CD8-positive, alpha-beta T cell (primary cell): ENCODE measurements at regions of chr17 and their contacts with region 1.

Region 1: DNA sequence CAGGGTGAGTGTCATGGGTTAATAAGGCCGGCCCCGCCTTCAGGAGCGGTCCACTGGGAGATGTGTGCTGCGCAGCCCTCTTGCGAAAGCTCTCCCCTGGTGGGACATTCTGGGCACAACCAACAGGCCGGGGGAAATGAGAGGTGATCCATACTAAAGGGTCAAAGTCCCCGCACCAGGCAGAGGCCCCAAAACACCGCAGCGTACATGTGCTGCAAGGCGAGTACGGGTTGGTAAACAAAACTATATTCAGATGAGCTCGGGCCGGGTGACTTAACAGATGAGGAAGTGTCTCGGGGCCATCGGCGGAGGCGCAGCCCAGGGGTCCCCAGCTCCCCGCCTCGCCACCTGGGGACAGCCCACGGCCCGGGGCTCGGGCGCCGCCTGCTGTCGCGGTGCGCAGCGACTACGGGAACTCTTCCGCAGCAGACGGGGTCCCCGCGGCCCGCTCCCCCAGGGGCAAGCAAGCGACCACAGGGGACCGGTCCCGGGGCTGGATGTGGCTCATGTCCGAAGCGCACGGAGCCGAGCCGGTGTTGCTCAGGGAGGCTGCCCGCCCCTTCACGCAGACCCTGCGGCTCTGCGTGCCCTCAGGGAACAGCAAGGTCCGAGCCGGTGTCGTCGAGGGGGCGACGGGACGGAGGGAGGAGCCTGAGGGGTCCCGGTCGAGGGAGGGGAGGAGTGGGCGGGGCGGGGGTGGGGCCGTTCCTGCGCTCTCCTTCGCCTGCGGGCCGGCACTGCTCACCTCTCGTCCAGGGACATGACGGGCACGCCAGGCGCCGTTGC is at the start of gene RAB37:
- DNase-seq: peak in 8 of 9 experiments; percentile 43 to 81 (median 62)
- ATAC-seq: peak; percentile 30
- H3K4me3 ChIP-seq: peak within 1 kb of the TSS; percentile 65 to 85
- H3K4me3 Mint-ChIP-seq: peak within 1 kb of the TSS; percentile 91
- H3K27ac ChIP-seq: peak within 1 kb of the TSS; percentile 47 to 55
- H3K27ac Mint-ChIP-seq: peak within 1 kb of the TSS; percentile 93
- H3K4me1 ChIP-seq: peaks cover 42% of the 10 kb centered on the region
- H3K4me1 Mint-ChIP-seq: peaks cover 51% of the 10 kb centered on the region
- H3K27me3 ChIP-seq: no peaks in the 10 kb centered on the region
- H3K27me3 Mint-ChIP-seq: no peaks in the 10 kb centered on the region
- CTCF ChIP-seq: peak; percentile 58
- total RNA-seq, gene RAB37: 33.7 to 36.0 TPM

Region 2: DNA sequence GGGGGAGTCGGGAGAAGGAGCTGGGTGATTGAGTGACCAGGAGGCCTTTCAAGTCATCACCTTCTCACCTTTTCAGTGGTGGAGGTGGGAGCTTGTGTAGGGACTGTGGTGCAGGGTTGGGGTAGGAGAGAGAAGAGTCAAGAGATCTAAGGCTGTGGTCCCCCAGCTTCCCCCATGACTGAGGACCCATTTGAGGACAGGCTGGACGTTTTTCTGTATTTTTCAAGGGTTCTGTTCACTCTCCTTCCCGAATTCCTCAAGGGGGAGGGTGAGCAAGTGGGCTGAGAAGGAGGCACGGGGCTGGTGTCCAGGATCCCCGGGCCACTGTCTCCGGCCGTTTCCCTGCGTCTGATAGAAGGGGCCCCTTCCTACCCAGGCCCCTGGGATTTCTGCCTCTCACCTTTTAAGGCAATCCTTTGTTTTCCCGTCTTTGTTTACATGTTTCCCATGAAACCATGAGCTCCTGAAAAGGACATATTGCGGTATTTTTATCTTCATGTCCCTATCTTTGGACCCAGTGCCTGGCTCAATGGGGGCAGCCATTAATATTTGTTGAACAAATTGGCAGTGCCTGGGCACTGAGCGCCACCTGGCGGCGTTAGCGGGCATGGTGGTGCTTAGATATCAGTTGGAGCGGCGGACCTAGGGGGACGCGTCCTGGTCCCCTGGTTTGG is 279.4 kb before region 1 on chr17:
- CTCF ChIA-PET with region 1: no interaction called
- POLR2A ChIA-PET with region 1: no interaction called
- intact Hi-C with region 1: loop called in 1 of 2 experiments (anchors 10 kb)
- DNase-seq: peak; percentile 54 to 83 (median 71)
- ATAC-seq: peak; percentile 62
- H3K4me3 ChIP-seq: no peak overlapping the region
- H3K4me3 Mint-ChIP-seq: no peak overlapping the region
- H3K27ac ChIP-seq: no peak overlapping the region
- H3K27ac Mint-ChIP-seq: no peak overlapping the region
- H3K4me1 ChIP-seq: peaks cover 38% of the 10 kb centered on the region
- H3K4me1 Mint-ChIP-seq: peaks cover 32% of the 10 kb centered on the region
- H3K27me3 ChIP-seq: no peaks in the 10 kb centered on the region
- H3K27me3 Mint-ChIP-seq: peaks cover 3% of the 10 kb centered on the region
- CTCF ChIP-seq: peak; percentile 91

Region 3: DNA sequence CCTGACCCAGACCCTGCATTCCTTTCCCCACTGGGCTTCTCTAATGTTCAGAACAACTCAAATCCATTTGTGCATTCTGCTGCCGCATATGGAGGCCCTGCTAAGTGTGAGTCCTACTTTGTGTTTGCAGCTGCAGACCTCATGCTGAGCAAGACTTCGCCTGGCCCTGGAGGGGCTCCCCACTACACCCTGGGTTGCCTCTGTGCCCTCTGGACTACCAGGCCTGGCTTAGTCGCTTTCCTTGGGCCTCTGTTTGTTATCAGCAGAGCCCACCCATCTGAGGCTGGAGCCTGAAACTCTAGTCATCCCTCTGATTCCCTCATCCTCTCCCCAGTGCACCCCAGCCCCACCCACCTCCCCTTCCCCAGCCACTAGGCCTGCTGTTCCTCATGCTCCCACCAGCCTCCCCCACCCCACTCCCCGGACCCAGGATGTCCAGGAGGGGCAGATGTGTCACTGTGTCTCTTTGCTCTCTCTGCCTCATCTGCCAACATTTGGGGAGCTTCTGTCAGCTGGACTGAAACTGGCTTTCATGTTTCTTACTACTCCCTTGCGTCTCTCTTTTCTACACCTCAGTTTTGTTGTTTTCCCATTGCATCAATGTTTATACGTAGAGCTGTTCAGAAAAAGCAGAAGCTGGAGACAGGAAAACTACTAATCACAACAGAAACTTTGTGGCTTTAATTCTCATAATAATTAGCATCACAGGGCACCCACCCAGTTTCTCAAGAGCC is 95.3 kb before region 1 on chr17:
- CTCF ChIA-PET with region 1: no interaction called
- POLR2A ChIA-PET with region 1: no interaction called
- intact Hi-C with region 1: no loop called
- DNase-seq: peak in 1 of 9 experiments; percentile 16
- ATAC-seq: no peak
- H3K4me3 ChIP-seq: no peak overlapping the region
- H3K4me3 Mint-ChIP-seq: no peak overlapping the region
- H3K27ac ChIP-seq: no peak overlapping the region
- H3K27ac Mint-ChIP-seq: no peak overlapping the region
- H3K4me1 ChIP-seq: peaks cover 10% of the 10 kb centered on the region
- H3K4me1 Mint-ChIP-seq: peaks cover 7% of the 10 kb centered on the region
- H3K27me3 ChIP-seq: peaks cover 2 to 11% of the 10 kb centered on the region in 2 experiments
- H3K27me3 Mint-ChIP-seq: peaks cover 40% of the 10 kb centered on the region
- CTCF ChIP-seq: no peak

Region 4: GRCh38 chr17:74671031-74671771 is 65.5 kb before region 1 on chr17:
- CTCF ChIA-PET with region 1: interaction called, 16 read pairs
- POLR2A ChIA-PET with region 1: interaction called, 3 read pairs
- intact Hi-C with region 1: no loop called
- DNase-seq: peak; percentile 51 to 84 (median 75)
- ATAC-seq: peak; percentile 97
- H3K4me3 ChIP-seq: no peak overlapping the region
- H3K4me3 Mint-ChIP-seq: no peak overlapping the region
- H3K27ac ChIP-seq: no peak overlapping the region
- H3K27ac Mint-ChIP-seq: no peak overlapping the region
- H3K4me1 ChIP-seq: no peaks in the 10 kb centered on the region
- H3K4me1 Mint-ChIP-seq: no peaks in the 10 kb centered on the region
- H3K27me3 ChIP-seq: peaks cover 2 to 15% of the 10 kb centered on the region in 2 experiments
- H3K27me3 Mint-ChIP-seq: peaks cover 51% of the 10 kb centered on the region
- CTCF ChIP-seq: no peak

Region 5: DNA sequence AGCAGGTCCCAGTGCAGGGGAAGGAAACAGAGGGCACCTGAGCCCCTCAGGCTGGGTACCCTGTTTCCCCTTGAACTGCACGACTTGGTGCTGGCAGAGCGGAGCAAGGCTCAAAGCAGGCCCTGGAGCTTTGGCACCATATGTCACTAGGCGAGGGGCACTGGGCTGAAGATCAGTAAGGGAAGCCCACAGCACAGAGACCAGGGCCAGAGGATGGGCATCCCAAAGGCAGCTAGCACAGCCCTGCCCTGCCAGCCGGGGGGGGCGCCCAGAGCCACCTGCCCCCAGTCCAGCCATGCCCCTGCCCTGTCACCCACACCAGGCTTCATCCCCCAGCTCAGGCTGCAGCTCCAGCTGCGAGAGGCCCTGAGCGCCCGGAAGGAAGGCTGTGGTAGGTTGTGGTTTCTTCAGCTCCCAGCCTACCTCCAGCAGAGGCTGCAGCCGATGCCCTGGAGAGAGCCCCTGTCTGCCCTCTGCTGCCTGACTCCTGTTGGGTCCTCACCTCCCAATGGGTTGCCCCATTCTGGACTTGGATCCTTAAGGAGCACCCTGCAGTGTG is 22.6 kb after region 1 on chr17:
- CTCF ChIA-PET with region 1: interaction called, 41 read pairs
- POLR2A ChIA-PET with region 1: interaction called, 67 read pairs
- intact Hi-C with region 1: no loop called
- DNase-seq: peak in 7 of 9 experiments; percentile 47 to 85 (median 71)
- ATAC-seq: peak; percentile 83
- H3K4me3 ChIP-seq: peak overlapping the region; percentile 37 to 41
- H3K4me3 Mint-ChIP-seq: peak overlapping the region; percentile 81
- H3K27ac ChIP-seq: peak overlapping the region; percentile 38 to 62
- H3K27ac Mint-ChIP-seq: peak overlapping the region; percentile 90
- H3K4me1 ChIP-seq: peaks cover 84% of the 10 kb centered on the region
- H3K4me1 Mint-ChIP-seq: peaks cover 75% of the 10 kb centered on the region
- H3K27me3 ChIP-seq: no peaks in the 10 kb centered on the region
- H3K27me3 Mint-ChIP-seq: no peaks in the 10 kb centered on the region
- CTCF ChIP-seq: no peak

Region 6: GRCh38 chr17:74790161-74791054 is 53.7 kb after region 1 on chr17:
- CTCF ChIA-PET with region 1: interaction called, 34 read pairs
- POLR2A ChIA-PET with region 1: no interaction called
- intact Hi-C with region 1: no loop called
- DNase-seq: peak in 1 of 9 experiments; percentile 27
- ATAC-seq: no peak
- H3K4me3 ChIP-seq: peak overlapping the region in 1 of 2 experiments; percentile 5
- H3K4me3 Mint-ChIP-seq: peak overlapping the region; percentile 57
- H3K27ac ChIP-seq: no peak overlapping the region
- H3K27ac Mint-ChIP-seq: peak overlapping the region; percentile 71
- H3K4me1 ChIP-seq: peaks cover 33% of the 10 kb centered on the region
- H3K4me1 Mint-ChIP-seq: peaks cover 40% of the 10 kb centered on the region
- H3K27me3 ChIP-seq: no peaks in the 10 kb centered on the region
- H3K27me3 Mint-ChIP-seq: no peaks in the 10 kb centered on the region
- CTCF ChIP-seq: no peak

Region 7: DNA sequence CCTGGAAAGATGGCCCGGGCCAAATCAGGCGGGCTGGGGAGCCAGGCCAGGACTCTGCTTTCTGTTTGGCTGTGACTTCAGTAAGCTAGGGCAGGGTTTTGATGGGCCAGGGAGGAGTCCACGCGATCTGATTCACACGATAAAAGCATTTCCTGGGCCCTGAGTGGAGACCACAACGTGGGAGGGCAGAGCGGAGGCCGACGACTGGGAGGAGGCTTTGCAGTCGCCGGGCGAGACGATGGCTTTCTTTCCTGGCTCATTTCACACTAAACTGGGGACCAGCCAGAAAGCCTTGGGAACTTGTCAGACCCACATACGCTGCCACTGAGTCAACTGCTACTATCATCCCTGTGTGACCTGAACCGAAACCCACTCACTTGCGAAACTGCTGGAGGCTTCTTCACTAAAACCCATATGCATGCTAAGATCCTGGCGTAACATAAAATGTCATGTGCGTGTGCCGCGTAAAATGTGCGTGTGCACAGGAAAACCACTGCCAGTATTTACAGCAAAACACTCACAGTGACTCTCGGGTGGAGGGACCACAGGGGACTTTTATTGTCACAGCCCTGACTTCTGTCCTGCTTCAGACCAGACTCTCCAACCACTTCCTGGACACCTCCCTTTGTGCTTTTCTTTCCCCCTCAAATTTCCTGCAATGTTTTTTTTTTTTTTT is 1778.7 kb after region 1 on chr17:
- CTCF ChIA-PET with region 1: no interaction called
- POLR2A ChIA-PET with region 1: no interaction called
- intact Hi-C with region 1: loop called in 1 of 2 experiments (anchors 10 kb)
- DNase-seq: peak; percentile 72 to 99 (median 84)
- ATAC-seq: peak; percentile 82
- H3K4me3 ChIP-seq: peak overlapping the region; percentile 32 to 44
- H3K4me3 Mint-ChIP-seq: peak overlapping the region; percentile 67
- H3K27ac ChIP-seq: peak overlapping the region; percentile 85 to 92
- H3K27ac Mint-ChIP-seq: peak overlapping the region; percentile 97
- H3K4me1 ChIP-seq: peaks cover 43% of the 10 kb centered on the region
- H3K4me1 Mint-ChIP-seq: peaks cover 49% of the 10 kb centered on the region
- H3K27me3 ChIP-seq: no peaks in the 10 kb centered on the region
- H3K27me3 Mint-ChIP-seq: no peaks in the 10 kb centered on the region
- CTCF ChIP-seq: no peak